ENCODE measurements at regions of chr2 and their contacts with region 1.

Region 1: DNA sequence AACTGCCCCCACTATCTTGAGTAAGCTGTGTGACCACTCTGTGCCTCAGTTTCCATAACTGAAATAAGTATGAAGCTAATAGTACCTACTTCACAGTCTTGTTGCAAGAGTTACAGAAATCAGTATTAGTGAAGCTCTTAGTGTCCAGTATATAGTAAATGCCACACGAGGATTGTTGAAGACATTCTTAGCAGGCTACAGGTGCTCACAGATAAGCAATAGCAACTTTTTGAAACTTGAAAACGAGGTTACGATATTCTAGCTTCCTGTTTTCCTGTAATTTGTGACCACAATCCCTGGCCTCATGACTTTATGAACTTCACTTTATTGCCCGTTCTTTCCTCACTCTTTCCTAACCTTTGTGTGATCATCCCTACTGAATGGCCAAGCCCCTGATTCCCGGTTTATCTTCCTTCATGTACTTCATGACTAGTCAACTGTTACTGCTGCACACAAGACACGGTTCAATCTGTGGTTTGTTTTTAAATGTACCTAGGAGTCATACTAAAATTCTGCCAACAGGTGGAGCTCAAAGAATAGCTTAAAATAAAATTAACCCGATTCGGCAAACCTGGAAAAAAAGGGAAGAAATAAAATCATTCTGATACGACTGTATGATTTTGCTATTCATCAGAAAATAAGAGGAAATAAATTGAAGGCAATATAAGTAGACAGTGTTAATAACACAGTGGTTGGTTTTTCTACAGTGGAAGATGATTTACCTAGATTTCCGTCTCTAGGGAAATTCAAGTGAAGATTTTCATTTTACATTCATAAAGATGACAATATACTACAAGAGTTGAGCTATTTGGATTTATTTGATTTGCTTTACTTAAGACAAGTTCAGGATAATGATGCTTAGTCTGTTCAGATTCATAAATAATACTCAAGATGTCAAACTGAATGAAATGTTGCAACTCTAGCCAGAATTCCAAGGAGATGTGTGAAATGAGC is 38.1 kb upstream of the STAT1 start:
- DNase-seq: peak; percentile 42
- H3K4me3 ChIP-seq: peak overlapping the region in 1 of 2 experiments; percentile 19; a peak in 1 of 4 replicates
- H3K27ac ChIP-seq: no peak overlapping the region
- H3K4me1 ChIP-seq: no peaks in the 10 kb centered on the region
- H3K27me3 ChIP-seq: no peaks in the 10 kb centered on the region
- CTCF ChIP-seq: peak; percentile 77
- EP300 ChIP-seq: no peak
- RAD21 ChIP-seq: peak; percentile 86

Region 2: DNA sequence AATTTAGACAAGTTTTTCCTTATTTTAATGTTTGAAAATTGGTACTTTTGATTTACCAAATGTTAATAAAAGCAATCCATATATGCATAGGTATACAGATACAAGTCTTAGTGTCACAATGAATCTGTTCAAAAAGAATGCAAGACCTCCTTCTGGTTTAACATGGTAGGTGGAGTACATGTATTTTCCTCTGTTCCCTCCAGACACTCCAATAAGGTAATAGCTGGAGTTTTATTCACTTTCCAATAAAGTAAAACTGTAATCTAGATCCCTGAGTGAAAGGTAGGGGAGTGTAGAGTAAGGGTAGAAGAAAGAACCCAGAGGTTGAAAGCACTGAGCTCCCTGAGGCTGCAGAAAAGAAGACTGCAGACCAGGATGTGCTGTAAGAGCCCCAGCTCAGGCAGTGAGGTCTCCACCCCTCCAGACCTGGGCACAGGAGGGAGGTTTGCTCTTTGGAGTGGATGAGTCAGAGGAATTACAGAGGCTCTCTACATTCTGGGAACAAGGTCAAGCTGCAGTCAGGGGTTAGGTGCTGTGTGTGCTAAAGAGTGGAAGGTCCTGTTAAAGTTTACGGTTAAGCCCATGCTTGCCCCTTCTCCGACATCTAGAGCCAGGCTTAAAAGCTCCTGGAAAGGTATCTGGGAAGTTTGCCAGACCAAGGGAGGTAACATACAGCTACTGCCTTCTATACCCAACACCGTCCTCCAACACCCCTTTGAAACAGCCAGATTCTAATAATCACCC is 10.5 kb before region 1 on chr2:
- CTCF ChIA-PET with region 1: interaction called, 25 read pairs
- POLR2A ChIA-PET with region 1: no interaction called
- DNase-seq: no peak
- H3K4me3 ChIP-seq: no peak overlapping the region
- H3K27ac ChIP-seq: no peak overlapping the region
- H3K4me1 ChIP-seq: peaks cover 0 to 14% of the 10 kb centered on the region in 2 experiments; a peak in 2 of 4 replicates
- H3K27me3 ChIP-seq: no peaks in the 10 kb centered on the region
- CTCF ChIP-seq: no peak
- EP300 ChIP-seq: no peak
- RAD21 ChIP-seq: no peak

Region 3: DNA sequence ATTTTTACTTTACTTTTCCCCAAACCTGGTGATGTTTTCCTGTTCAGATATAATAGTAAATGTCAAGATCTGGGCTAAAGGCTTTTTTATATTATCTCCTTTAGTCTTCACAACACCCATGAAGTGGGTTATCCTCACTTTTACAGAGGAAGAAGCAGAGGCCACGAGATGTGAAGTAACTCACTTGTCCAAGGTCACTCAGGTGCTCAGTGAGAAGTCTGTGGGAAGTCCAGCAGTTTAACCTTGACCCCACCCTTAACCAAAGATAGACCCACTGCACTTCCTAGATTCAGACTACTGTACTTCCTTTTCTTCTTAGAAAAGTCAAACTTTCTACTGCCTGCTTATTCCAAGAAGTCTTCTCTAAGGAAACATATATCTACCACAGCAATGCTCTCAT is 18.2 kb after region 1 on chr2:
- CTCF ChIA-PET with region 1: interaction called, 37 read pairs
- POLR2A ChIA-PET with region 1: no interaction called
- DNase-seq: no peak
- H3K4me3 ChIP-seq: no peak overlapping the region
- H3K27ac ChIP-seq: no peak overlapping the region
- H3K4me1 ChIP-seq: no peaks in the 10 kb centered on the region
- H3K27me3 ChIP-seq: no peaks in the 10 kb centered on the region
- CTCF ChIP-seq: no peak
- EP300 ChIP-seq: no peak
- RAD21 ChIP-seq: no peak

Region 4: DNA sequence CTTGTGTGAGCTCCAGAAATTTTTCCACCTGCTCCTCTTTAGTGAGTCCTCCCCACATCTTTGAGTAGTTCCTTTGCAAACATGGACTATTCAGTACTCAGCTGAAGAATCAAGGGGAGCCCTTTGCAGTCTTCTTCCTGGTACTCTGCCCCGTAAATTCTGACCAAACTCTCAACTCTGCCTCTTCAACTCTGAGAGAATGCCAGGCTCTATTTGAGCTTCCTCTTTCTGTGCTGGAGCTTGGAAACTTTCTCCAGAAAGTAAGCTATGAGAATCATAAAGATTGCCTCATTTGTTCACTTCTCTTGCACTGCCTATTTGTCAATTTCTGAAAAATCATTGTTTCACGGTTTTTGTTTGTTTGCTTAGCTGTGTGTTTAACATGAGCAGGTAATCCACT is 106.1 kb after region 1 on chr2:
- CTCF ChIA-PET with region 1: interaction called, 106 read pairs
- POLR2A ChIA-PET with region 1: no interaction called
- DNase-seq: no peak
- H3K4me3 ChIP-seq: no peak overlapping the region
- H3K27ac ChIP-seq: no peak overlapping the region
- H3K4me1 ChIP-seq: no peaks in the 10 kb centered on the region
- H3K27me3 ChIP-seq: no peaks in the 10 kb centered on the region
- CTCF ChIP-seq: no peak
- EP300 ChIP-seq: no peak
- RAD21 ChIP-seq: no peak

Region 5: GRCh38 chr2:191171708-191172355 is 119.7 kb after region 1 on chr2:
- CTCF ChIA-PET with region 1: interaction called, 10 read pairs
- POLR2A ChIA-PET with region 1: no interaction called
- DNase-seq: no peak
- H3K4me3 ChIP-seq: 0 out of 4 replicates have a peak overlapping the region, but pooled peaks of 1 of the 2 experiments have one; percentile 18
- H3K27ac ChIP-seq: peak overlapping the region; percentile 88 to 90
- H3K4me1 ChIP-seq: peaks cover 12 to 37% of the 10 kb centered on the region in 2 experiments
- H3K27me3 ChIP-seq: no peaks in the 10 kb centered on the region
- CTCF ChIP-seq: no peak
- EP300 ChIP-seq: peak in 1 of 2 experiments; percentile 93; a peak in 2 of 4 replicates
- RAD21 ChIP-seq: no peak

Region 6: GRCh38 chr2:191515551-191515950 is 463.4 kb after region 1 on chr2:
- CTCF ChIA-PET with region 1: interaction called, 10 read pairs
- POLR2A ChIA-PET with region 1: no interaction called
- DNase-seq: no peak
- H3K4me3 ChIP-seq: no peak overlapping the region
- H3K27ac ChIP-seq: no peak overlapping the region
- H3K4me1 ChIP-seq: peaks cover 0 to 3% of the 10 kb centered on the region in 2 experiments; a peak in 1 of 4 replicates
- H3K27me3 ChIP-seq: no peaks in the 10 kb centered on the region
- CTCF ChIP-seq: no peak
- EP300 ChIP-seq: no peak
- RAD21 ChIP-seq: no peak

Measured in SK-N-SH (cell line).